GM12878 (cell line): ENCODE measurements at regions of chr7 and their contacts with region 1.

Region 1: GRCh38 chr7:22438994-22439393 is 61.0 kb downstream of the STEAP1B start:
- DNase-seq: no peak
- ATAC-seq: peak; percentile 75
- H3K4me3 ChIP-seq: no peak overlapping the region
- H3K27ac ChIP-seq: no peak overlapping the region
- H3K4me1 ChIP-seq: peaks cover 21% of the 10 kb centered on the region
- H3K27me3 ChIP-seq: no peaks in the 10 kb centered on the region
- CTCF ChIP-seq: no peak
- EP300 ChIP-seq: peak; percentile 68 to 69; a peak in 2 of 4 replicates
- POLR2A ChIP-seq: no peak
- RAD21 ChIP-seq: no peak

Region 2: GRCh38 chr7:22350466-22351328 is 88.3 kb before region 1 on chr7:
- CTCF ChIA-PET with region 1: interaction called, 5 read pairs
- POLR2A ChIA-PET with region 1: no interaction called
- RAD21 ChIA-PET with region 1: interaction called, 4 read pairs
- SMC1A ChIA-PET with region 1: interaction called, 12 read pairs
- in situ Hi-C with region 1: no loop called
- intact Hi-C with region 1: no loop called
- DNase-seq: peak; percentile 46
- ATAC-seq: peak; percentile 72
- H3K4me3 ChIP-seq: peak overlapping the region; percentile 36; the same call in 1 of the 2 replicates
- H3K27ac ChIP-seq: peak overlapping the region; percentile 79
- H3K4me1 ChIP-seq: peaks cover 27% of the 10 kb centered on the region; the same call in 1 of the 2 replicates
- H3K27me3 ChIP-seq: no peaks in the 10 kb centered on the region; a peak in 1 of 4 replicates
- CTCF ChIP-seq: no peak
- EP300 ChIP-seq: no peak
- POLR2A ChIP-seq: no peak
- RAD21 ChIP-seq: no peak

Region 3: GRCh38 chr7:22426463-22427121 is 12.4 kb before region 1 on chr7:
- CTCF ChIA-PET with region 1: interaction called, 5 read pairs
- POLR2A ChIA-PET with region 1: interaction called, 5 read pairs
- RAD21 ChIA-PET with region 1: interaction called, 4 read pairs
- SMC1A ChIA-PET with region 1: interaction called, 24 read pairs
- in situ Hi-C with region 1: no loop called
- intact Hi-C with region 1: no loop called
- DNase-seq: no peak
- ATAC-seq: peak; percentile 64
- H3K4me3 ChIP-seq: no peak overlapping the region
- H3K27ac ChIP-seq: no peak overlapping the region
- H3K4me1 ChIP-seq: peaks cover 6% of the 10 kb centered on the region; the same call in 1 of the 2 replicates
- H3K27me3 ChIP-seq: no peaks in the 10 kb centered on the region
- CTCF ChIP-seq: no peak
- EP300 ChIP-seq: no peak
- POLR2A ChIP-seq: no peak
- RAD21 ChIP-seq: no peak

Region 4: DNA sequence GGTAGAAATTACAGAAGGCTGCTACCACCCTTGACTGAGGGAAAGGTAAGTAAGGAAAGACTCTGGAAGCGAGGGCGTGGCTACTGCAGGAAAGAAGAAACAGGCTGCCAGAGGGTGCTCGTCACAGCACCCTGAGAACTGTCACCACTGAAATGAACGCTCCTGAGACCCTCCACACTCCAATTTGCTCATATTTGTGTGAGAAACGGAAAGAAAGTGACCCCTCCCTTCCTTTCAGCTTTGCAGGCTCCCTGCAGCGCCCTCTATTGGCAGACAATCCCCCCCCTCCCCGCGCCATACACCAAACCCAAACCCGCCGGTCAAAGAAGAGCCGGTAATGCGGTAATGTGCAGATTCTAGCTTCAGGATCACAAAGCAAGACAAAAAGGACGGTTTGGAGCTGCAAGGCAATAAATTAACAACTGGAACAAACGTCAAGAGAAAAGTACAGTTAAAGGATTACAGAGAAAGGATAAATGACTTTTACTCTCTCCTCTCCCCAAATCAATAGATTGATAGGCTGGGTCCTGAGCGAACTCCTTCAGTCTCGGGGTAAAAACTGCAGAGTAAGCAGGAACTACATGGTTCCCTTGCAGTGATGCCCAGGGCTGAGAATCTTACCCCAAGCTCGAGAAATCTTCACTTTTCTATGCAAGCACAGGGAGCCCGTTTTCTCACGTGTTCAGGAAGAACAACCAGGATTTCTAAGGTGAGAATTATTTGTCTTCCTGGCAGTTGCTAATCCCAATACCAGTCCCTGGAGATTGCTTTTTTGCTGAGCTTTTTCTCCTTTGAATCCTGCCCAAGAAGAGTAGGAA is 13.4 kb after region 1 on chr7:
- CTCF ChIA-PET with region 1: interaction called, 17 read pairs
- POLR2A ChIA-PET with region 1: interaction called, 3 read pairs
- RAD21 ChIA-PET with region 1: interaction called, 8 read pairs
- SMC1A ChIA-PET with region 1: interaction called, 38 read pairs
- in situ Hi-C with region 1: no loop called
- intact Hi-C with region 1: no loop called
- DNase-seq: no peak
- ATAC-seq: peak; percentile 65
- H3K4me3 ChIP-seq: no peak overlapping the region; the same call in 1 of the 2 replicates
- H3K27ac ChIP-seq: no peak overlapping the region
- H3K4me1 ChIP-seq: peaks cover 7% of the 10 kb centered on the region
- H3K27me3 ChIP-seq: no peaks in the 10 kb centered on the region; a peak in 1 of 4 replicates
- CTCF ChIP-seq: peak; percentile 53 to 85 (median 81)
- EP300 ChIP-seq: no peak
- POLR2A ChIP-seq: no peak
- RAD21 ChIP-seq: peak; percentile 70

Region 5: GRCh38 chr7:22586786-22587140 is 147.8 kb after region 1 on chr7:
- CTCF ChIA-PET with region 1: no interaction called
- POLR2A ChIA-PET with region 1: no interaction called
- RAD21 ChIA-PET with region 1: no interaction called
- SMC1A ChIA-PET with region 1: no interaction called
- in situ Hi-C with region 1: no loop called
- intact Hi-C with region 1: no loop called
- DNase-seq: no peak
- ATAC-seq: no peak
- H3K4me3 ChIP-seq: no peak overlapping the region
- H3K27ac ChIP-seq: no peak overlapping the region
- H3K4me1 ChIP-seq: peaks cover 11% of the 10 kb centered on the region
- H3K27me3 ChIP-seq: peaks cover 1 to 11% of the 10 kb centered on the region in 2 experiments
- CTCF ChIP-seq: no peak
- EP300 ChIP-seq: no peak
- POLR2A ChIP-seq: no peak
- RAD21 ChIP-seq: no peak